ENCODE measurements at regions of chrX and their contacts with region 1.

Region 1: GRCh38 chrX:150324035-150324728 is 38.9 kb upstream of the MAMLD1 start:
- DNase-seq: peak; percentile 24
- H3K4me3 Mint-ChIP-seq: peak overlapping the region; percentile 28
- H3K27ac Mint-ChIP-seq: no peak overlapping the region
- H3K4me1 Mint-ChIP-seq: peaks cover 24% of the 10 kb centered on the region
- H3K27me3 Mint-ChIP-seq: peaks cover 16% of the 10 kb centered on the region
- CTCF ChIP-seq: no peak

Region 2: GRCh38 chrX:150155436-150156035 is 168.6 kb before region 1 on chrX:
- CTCF ChIA-PET with region 1: interaction called, 10 read pairs
- intact Hi-C with region 1: no loop called
- DNase-seq: peak; percentile 38
- H3K4me3 Mint-ChIP-seq: no peak overlapping the region
- H3K27ac Mint-ChIP-seq: no peak overlapping the region
- H3K4me1 Mint-ChIP-seq: no peaks in the 10 kb centered on the region
- H3K27me3 Mint-ChIP-seq: no peaks in the 10 kb centered on the region
- CTCF ChIP-seq: no peak

Region 3: GRCh38 chrX:150258463-150259430 is 65.4 kb before region 1 on chrX:
- CTCF ChIA-PET with region 1: no interaction called
- intact Hi-C with region 1: no loop called
- DNase-seq: no peak
- H3K4me3 Mint-ChIP-seq: no peak overlapping the region
- H3K27ac Mint-ChIP-seq: no peak overlapping the region
- H3K4me1 Mint-ChIP-seq: no peaks in the 10 kb centered on the region
- H3K27me3 Mint-ChIP-seq: peaks cover 12% of the 10 kb centered on the region
- CTCF ChIP-seq: no peak

Measured in Calu3 (cell line).